Activated B cell treated with CpG ODN at 0.5 μM for 24 hours (primary cell): ENCODE measurements at regions of chr19 and their contacts with region 1.

Region 1: DNA sequence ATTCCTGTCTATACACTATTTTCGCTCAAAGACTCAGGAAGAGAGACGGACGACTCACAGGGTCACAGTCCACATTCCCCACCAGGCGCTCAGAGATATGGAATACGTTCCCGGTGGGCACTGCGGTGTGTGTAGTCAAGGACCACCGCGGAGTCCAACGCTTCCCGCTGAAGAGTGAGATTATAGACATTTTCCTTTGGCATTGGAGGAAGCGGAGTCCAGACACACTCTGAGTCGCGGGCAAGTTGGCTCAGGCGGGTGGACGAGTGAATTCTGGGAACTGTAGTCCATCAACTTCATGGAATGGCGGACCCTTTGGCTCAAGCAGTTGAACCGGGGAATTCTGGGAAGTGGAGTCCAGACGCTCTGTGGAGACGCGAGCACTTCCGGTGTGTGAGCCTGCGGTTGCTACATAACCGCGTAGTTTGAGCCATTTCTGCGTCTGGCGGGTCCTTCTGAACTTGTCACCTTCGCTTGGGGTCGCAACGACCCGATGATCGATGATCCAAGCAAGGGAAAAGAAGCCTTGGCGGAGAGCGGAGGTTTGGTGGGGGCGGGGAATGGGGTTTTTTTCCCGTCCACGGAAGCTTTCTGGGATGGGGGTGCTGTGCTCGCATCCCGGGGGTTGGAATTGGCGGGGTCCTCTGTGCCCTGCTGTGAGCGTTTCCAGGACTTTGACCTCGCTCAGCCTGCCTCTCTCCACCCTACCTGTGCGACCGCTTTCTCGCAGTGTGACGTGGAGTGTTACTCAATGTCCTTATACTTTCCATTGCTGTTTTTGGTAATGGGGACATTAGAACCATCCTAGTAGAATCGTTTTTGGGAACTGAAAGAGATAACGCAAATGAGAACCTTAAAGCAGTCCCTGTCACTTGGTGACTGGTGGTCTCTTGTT is at the start of gene ZNF230:
- DNase-seq: peak; percentile 63
- ATAC-seq: peak; percentile 94
- H3K4me3 Mint-ChIP-seq: peak within 1 kb of the TSS; percentile 99
- H3K27ac Mint-ChIP-seq: peak within 1 kb of the TSS; percentile 93
- H3K4me1 Mint-ChIP-seq: peaks cover 17% of the 10 kb centered on the region
- H3K27me3 Mint-ChIP-seq: no peaks in the 10 kb centered on the region
- CTCF ChIP-seq: no peak
- total RNA-seq, gene ZNF230: 12.1 and 15.0 TPM in 2 replicates

Region 2: DNA sequence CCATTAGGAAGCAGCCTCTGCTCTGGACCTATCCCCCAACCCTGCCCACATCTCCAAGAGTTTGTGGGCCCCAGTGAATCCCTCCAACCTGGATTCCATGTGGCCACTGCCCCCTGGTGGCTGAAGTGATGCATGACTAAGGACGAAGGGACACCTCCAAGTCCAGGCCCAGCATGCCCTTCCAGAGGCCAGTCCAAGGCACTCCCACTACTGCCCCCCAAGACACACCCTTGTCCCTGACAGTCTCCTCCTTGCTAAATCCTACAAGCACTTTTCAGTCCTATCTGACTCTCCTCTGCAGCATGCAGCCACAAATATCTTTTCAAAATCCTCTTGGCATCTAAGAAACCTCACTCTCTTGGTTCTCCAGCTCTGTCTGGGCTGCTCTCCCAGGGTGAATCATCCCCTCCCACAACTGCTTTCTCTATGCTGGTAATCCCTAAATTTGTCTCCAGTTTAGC is 1818.4 kb before region 1 on chr19:
- CTCF ChIA-PET with region 1: no interaction called
- POLR2A ChIA-PET with region 1: no interaction called
- intact Hi-C with region 1: no loop called
- DNase-seq: peak; percentile 61
- ATAC-seq: peak; percentile 83
- H3K4me3 Mint-ChIP-seq: peak overlapping the region; percentile 2
- H3K27ac Mint-ChIP-seq: peak overlapping the region; percentile 30
- H3K4me1 Mint-ChIP-seq: peaks cover 37% of the 10 kb centered on the region
- H3K27me3 Mint-ChIP-seq: peaks cover 13% of the 10 kb centered on the region
- CTCF ChIP-seq: no peak

Region 3: DNA sequence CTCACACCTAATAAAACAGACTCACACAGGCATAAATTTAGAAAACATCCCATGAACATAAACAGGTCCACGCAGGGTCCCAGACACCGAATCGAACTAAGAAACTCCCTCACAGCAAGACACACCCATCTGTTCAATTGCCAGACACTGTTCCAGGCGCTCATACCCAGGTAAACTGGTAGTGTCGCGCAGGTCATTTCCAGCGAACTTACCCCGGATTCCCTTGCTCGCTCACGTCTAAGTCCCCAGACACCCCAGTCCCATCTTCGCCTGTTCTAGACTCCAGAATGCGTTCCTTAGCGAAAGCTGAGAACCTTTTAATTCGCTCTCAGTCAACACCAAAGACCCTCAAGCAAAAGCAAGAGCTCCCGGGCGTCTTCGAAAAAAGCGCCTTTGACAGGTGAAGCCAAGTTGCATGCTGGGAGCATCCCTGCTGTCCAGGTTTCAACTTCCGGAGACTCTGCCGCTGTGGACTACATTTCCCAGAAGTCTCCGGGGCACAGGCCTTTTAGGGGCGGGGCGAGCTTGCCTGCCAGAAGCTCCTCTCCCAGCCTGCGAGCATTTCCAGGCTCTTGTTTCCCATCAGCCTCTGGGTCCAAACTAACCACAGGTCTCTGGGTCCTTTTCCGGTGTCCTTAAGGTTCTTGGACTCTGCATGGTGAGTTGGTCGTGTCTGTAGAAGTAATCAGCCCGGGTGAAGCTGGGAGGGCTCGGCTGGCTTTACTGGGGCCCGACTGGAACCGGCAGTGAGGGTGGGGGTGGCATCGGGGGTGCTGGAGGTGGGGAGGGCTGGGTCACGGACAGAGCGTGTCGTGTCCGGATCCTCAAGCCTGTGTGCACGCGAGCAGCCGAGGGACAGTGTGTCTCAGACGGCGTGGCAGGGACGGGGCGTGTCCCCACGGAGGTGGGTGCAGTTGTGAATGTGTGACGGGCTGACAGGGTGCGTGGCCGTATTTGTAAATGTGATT is 175.7 kb before region 1 on chr19 and contains the start of gene ZNF283:
- CTCF ChIA-PET with region 1: no interaction called
- POLR2A ChIA-PET with region 1: interaction called, 3 read pairs
- intact Hi-C with region 1: loop called (anchors 5 kb)
- DNase-seq: peak; percentile 76
- ATAC-seq: peak; percentile 94
- H3K4me3 Mint-ChIP-seq: peak within 1 kb of the TSS; percentile 92
- H3K27ac Mint-ChIP-seq: peak within 1 kb of the TSS; percentile 53
- H3K4me1 Mint-ChIP-seq: peaks cover 16% of the 10 kb centered on the region
- H3K27me3 Mint-ChIP-seq: peaks cover 7% of the 10 kb centered on the region
- CTCF ChIP-seq: no peak
- total RNA-seq, gene ZNF283: 10.4 and 13.0 TPM in 2 replicates

Region 4: GRCh38 chr19:43934985-43935708 is 67.7 kb before region 1 on chr19 and contains the start of gene ZNF45:
- CTCF ChIA-PET with region 1: no interaction called
- POLR2A ChIA-PET with region 1: interaction called, 10 read pairs
- intact Hi-C with region 1: loop called (anchors 1 kb)
- DNase-seq: peak; percentile 81
- ATAC-seq: peak; percentile 96
- H3K4me3 Mint-ChIP-seq: peak within 1 kb of the TSS; percentile 93
- H3K27ac Mint-ChIP-seq: peak within 1 kb of the TSS; percentile 89
- H3K4me1 Mint-ChIP-seq: peaks cover 22% of the 10 kb centered on the region
- H3K27me3 Mint-ChIP-seq: peaks cover 4% of the 10 kb centered on the region
- CTCF ChIP-seq: no peak
- total RNA-seq, gene ZNF45: 17.2 and 19.1 TPM in 2 replicates

Region 5: DNA sequence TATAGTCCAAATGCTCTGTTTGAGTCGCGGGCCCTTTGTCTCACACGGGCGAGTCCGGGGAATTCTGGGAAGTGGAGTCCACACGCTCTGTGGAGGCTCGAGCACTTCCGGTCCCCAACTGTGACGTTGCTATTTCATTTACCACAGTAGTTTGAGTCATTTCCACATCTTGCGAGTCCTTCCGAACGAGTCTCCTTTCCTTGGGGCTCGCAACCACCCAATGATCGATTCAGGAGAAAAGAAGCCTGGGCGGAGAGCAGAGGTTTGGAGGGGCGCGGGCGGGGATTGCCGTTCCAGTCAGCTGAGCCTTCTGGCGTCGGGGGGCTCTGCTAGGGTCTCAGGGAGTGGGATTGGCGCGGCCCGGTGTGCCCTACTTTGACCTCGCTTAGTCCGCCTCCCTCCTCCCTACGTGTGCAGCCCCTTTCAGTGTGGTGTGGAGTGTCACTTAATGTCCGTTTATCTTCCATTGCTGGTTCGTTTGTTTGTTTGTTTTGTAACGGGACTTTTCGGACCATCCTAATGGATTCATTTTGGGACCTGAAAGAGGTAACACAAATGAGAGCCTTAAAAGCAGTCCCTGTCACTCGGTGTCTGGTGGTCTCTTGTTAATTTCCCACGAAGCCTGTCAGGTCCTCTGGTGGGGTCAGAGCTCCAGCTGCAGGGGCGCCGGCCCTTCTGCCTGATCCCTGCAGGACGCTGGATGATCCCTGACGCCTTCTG is 22.6 kb after region 1 on chr19 and contains the start of gene ZNF222:
- CTCF ChIA-PET with region 1: no interaction called
- POLR2A ChIA-PET with region 1: no interaction called
- intact Hi-C with region 1: loop called (anchors 2 kb)
- DNase-seq: peak; percentile 57
- ATAC-seq: peak; percentile 99
- H3K4me3 Mint-ChIP-seq: peak within 1 kb of the TSS; percentile 98
- H3K27ac Mint-ChIP-seq: peak within 1 kb of the TSS; percentile 85
- H3K4me1 Mint-ChIP-seq: peaks cover 18% of the 10 kb centered on the region
- H3K27me3 Mint-ChIP-seq: peaks cover 6% of the 10 kb centered on the region
- CTCF ChIP-seq: no peak
- total RNA-seq, gene ZNF222: 6.0 and 6.7 TPM in 2 replicates

Region 6: GRCh38 chr19:44113138-44113783 is 110.4 kb after region 1 on chr19 and contains the start of gene ZNF225:
- CTCF ChIA-PET with region 1: no interaction called
- POLR2A ChIA-PET with region 1: no interaction called
- intact Hi-C with region 1: loop called (anchors 1 kb)
- DNase-seq: peak; percentile 65
- ATAC-seq: peak; percentile 95
- H3K4me3 Mint-ChIP-seq: peak within 1 kb of the TSS; percentile 97
- H3K27ac Mint-ChIP-seq: peak within 1 kb of the TSS; percentile 83
- H3K4me1 Mint-ChIP-seq: peaks cover 31% of the 10 kb centered on the region
- H3K27me3 Mint-ChIP-seq: no peaks in the 10 kb centered on the region
- CTCF ChIP-seq: no peak
- total RNA-seq, gene ZNF225: 7.9 and 9.2 TPM in 2 replicates

Region 7: DNA sequence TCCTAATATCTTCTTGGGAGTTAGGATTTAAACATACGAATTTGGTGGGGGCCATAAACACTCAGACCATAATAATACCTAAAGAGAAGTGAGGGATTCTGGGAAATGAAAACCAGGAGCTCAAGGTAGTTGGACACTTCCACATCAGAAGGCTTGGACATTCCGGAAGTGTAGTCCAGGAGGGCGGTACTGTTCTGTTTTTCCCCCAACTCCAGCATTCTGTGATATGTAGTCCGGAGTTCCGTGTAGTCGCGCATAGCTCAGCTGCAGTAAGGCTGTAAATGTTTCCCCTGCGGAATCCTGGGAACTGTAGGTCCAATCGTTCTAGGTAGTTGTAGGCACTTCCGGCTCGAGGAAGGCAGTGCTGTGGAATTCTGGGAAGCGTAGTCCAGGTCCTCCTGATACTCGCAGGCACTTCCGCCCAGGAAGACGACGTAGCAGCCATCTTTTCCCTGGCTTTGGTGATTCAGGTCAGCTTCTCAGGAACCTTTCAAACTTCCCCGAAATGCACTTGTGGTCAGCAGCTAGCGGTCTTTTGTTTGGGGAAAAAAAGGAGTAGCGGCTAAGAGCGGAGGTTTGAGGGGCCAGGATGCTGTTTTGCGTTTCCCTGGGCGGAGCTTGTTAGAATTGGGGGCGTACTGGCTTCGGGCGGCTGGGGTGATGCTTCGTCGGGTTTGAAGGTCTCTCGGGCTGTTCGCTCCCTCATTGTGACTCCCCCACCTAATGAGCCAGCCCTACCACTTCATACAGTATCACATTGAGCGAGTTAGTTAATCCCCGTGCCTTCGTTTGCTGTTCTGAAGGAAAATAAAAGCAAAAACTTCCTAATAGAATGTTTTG is 162.1 kb after region 1 on chr19 and contains the start of gene ZNF226:
- CTCF ChIA-PET with region 1: no interaction called
- POLR2A ChIA-PET with region 1: no interaction called
- intact Hi-C with region 1: loop called (anchors 2 kb)
- DNase-seq: peak; percentile 57
- ATAC-seq: peak; percentile 92
- H3K4me3 Mint-ChIP-seq: peak within 1 kb of the TSS; percentile 99
- H3K27ac Mint-ChIP-seq: peak within 1 kb of the TSS; percentile 97
- H3K4me1 Mint-ChIP-seq: peaks cover 31% of the 10 kb centered on the region
- H3K27me3 Mint-ChIP-seq: no peaks in the 10 kb centered on the region
- CTCF ChIP-seq: no peak
- total RNA-seq, gene ZNF226: 37.7 and 38.3 TPM in 2 replicates

Region 8: DNA sequence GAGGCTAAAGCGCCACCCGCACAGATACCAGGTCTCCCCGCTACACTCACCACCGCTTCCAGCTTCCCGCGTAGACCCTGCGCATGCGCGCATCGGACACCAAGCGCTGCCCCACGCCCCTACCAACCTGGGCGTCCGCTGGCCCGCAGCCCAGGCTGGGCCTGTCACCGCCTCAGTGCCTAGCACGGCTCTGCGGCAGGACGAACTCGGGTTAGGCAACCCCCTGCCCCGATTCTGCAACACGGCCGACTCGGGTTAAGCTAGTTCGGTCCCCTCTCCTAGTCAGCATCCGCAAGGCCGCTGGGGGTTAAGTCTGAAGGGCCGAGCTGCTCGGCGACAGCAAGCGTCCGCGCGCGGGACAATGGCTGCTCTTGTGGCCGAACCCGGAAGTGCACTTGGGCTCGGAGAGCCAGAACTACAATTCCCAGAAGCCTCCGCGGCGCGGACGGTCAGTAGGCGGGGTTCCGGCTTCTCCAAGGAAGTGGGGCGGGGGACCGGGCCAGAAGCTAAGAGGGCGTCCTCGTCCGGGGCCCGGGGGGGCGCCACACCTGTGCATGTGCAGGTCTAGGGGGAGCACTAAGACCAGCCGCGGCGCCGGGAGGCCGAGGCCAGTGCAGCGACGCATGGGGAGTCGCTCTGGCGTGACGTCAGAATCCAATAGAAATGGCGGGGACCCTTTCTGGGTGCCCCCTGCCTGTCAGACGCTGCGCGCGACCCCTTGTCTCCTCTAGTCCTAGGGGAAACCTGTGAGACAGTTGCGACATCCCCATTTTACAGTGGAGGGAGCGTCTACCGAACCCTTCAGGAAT is 497.5 kb after region 1 on chr19 and contains the start of gene ZNF180:
- CTCF ChIA-PET with region 1: no interaction called
- POLR2A ChIA-PET with region 1: no interaction called
- intact Hi-C with region 1: loop called (anchors 5 kb)
- DNase-seq: peak; percentile 95
- ATAC-seq: peak; percentile 91
- H3K4me3 Mint-ChIP-seq: peak within 1 kb of the TSS; percentile 96
- H3K27ac Mint-ChIP-seq: peak within 1 kb of the TSS; percentile 86
- H3K4me1 Mint-ChIP-seq: peaks cover 36% of the 10 kb centered on the region
- H3K27me3 Mint-ChIP-seq: peaks cover 10% of the 10 kb centered on the region
- CTCF ChIP-seq: no peak
- total RNA-seq, gene ZNF180: 11.6 and 14.4 TPM in 2 replicates